ENCODE measurements at regions of chr2 and their contacts with region 1.

Region 1: GRCh38 chr2:47906157-47907038 is at the start of gene FBXO11:
- ATAC-seq: peak; percentile 80 to 91 (median 88)
- H3K4me3 ChIP-seq: peak within 1 kb of the TSS; percentile 56 to 90 (median 86)
- H3K27ac ChIP-seq: peak within 1 kb of the TSS; percentile 93 to 98
- H3K4me1 ChIP-seq: peaks cover 4 to 5% of the 10 kb centered on the region in 2 donors
- total RNA-seq, gene FBXO11: 21.6 to 64.9 (median 46.6) TPM

Region 2: GRCh38 chr2:48080534-48081316 is 174.3 kb after region 1 on chr2:
- in situ Hi-C with region 1: loop called in 1 of 9 experiments (anchors 25 kb)
- ATAC-seq: no peak
- H3K4me3 ChIP-seq: no peak overlapping the region
- H3K27ac ChIP-seq: no peak overlapping the region
- H3K4me1 ChIP-seq: no peaks in the 10 kb centered on the region